ENCODE measurements at regions of chr3 and their contacts with region 1.

Region 1: DNA sequence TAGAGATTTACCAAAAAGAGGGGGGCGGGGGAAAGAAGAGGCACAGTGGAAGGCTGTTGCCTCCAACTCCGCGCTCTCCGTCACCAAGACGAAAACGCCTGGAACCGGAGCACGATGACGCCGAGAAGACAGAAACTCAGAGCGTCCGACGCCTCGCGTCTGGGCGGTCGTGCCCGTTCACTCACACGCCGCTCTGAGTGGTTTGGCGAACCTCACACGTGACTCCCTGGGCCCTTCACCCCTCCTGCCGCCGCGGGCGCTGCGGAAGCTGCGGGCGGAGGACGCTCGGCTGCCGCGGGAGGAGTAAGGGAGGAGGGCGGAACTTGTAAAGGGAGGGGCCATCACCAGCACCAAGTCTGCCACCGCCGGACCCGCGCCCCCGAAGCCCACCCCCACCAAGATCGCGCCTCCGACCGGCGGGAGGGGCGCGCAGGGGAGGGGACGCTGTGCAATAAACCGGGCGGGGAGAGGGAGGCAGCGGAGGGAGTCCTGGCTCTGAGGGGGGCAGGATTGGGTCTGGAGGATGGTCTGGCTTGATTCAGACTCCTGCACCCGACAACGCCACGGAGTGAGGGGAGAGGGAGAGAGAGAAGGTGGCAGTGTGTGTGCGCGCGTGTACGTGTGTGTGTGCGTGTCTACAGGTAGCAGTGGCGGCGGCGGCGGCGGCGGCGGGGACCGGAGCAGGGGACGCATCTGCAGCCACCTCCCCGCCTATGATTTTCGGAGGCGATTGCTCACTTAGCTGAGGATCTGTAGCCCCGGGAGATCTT is 1.9 kb upstream of the NLGN1 start:
- DNase-seq: peak; percentile 95
- H3K4me3 ChIP-seq: peak overlapping the region; percentile 75 to 92 (median 80)
- H3K27ac ChIP-seq: peak overlapping the region; percentile 86 to 94 (median 90)
- H3K4me1 ChIP-seq: peaks cover 0 to 18% (median 16%) of the 10 kb centered on the region in 4 donors
- H3K27me3 ChIP-seq: peaks cover 0 to 4% (median 0%) of the 10 kb centered on the region in 3 donors
- CTCF ChIP-seq: no peak
- EP300 ChIP-seq: no peak
- POLR2A ChIP-seq: peak; percentile 68 to 84

Region 2: GRCh38 chr3:173553635-173554280 is 158.2 kb after region 1 on chr3:
- intact Hi-C with region 1: loop called (anchors 5 kb)
- DNase-seq: no peak
- H3K4me3 ChIP-seq: no peak overlapping the region
- H3K27ac ChIP-seq: no peak overlapping the region
- H3K4me1 ChIP-seq: peaks cover 0 to 13% (median 3%) of the 10 kb centered on the region in 4 donors
- H3K27me3 ChIP-seq: no peaks in the 10 kb centered on the region
- CTCF ChIP-seq: peak in 3 of 4 experiments; percentile 38 to 74 (median 70)
- EP300 ChIP-seq: no peak
- POLR2A ChIP-seq: no peak

Region 3: GRCh38 chr3:173725507-173725906 is 329.9 kb after region 1 on chr3:
- intact Hi-C with region 1: no loop called
- DNase-seq: no peak
- H3K4me3 ChIP-seq: no peak overlapping the region
- H3K27ac ChIP-seq: no peak overlapping the region
- H3K4me1 ChIP-seq: no peaks in the 10 kb centered on the region
- H3K27me3 ChIP-seq: no peaks in the 10 kb centered on the region
- CTCF ChIP-seq: no peak
- EP300 ChIP-seq: no peak
- POLR2A ChIP-seq: no peak

Region 4: GRCh38 chr3:174440741-174441587 is 1045.4 kb after region 1 on chr3:
- intact Hi-C with region 1: loop called (anchors 2 kb)
- DNase-seq: peak; percentile 94
- H3K4me3 ChIP-seq: peak overlapping the region; percentile 77 to 86 (median 84)
- H3K27ac ChIP-seq: peak overlapping the region; percentile 96 to 99 (median 98)
- H3K4me1 ChIP-seq: peaks cover 0 to 32% (median 20%) of the 10 kb centered on the region in 4 donors
- H3K27me3 ChIP-seq: no peaks in the 10 kb centered on the region
- CTCF ChIP-seq: no peak
- EP300 ChIP-seq: no peak
- POLR2A ChIP-seq: peak in 1 of 2 donors; percentile 7